Aorta (tissue), 5 donors: ENCODE measurements at regions of chr1 and their contacts with region 1.

Region 1: DNA sequence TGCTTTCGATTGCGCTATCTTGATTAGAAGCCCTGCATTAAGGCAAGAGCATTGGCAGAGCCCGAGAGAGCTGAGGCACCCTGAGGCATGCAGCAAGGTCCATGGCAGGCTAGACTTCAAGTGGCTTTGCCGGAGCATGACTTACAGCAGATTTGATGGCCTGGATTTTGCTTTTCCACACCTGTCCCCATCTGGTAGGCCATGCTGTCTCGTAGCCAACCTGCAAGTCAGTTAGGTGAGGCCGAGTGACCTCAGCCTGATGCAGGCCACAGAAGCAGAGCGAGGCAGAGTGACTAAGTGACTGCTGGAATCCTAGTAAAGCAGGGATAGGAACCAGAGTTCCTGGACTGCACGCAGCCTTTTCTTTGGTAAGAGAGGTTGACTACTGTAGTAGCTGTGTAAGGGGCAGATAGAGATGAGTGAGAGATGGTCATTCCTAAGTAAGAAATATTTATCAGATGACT is 148.9 kb downstream of the PBX1 start:
- DNase-seq: peak in 1 of 2 donors; percentile 65
- ATAC-seq: peak; percentile 52
- H3K4me3 ChIP-seq: no peak overlapping the region
- H3K27ac ChIP-seq: peak overlapping the region in 1 of 2 donors; percentile 79
- H3K4me1 ChIP-seq: peaks cover 9 to 11% of the 10 kb centered on the region in 2 donors
- H3K27me3 ChIP-seq: no peaks in the 10 kb centered on the region

Region 2: GRCh38 chr1:164754088-164754600 is 46.2 kb after region 1 on chr1:
- intact Hi-C with region 1: loop called in 1 of 2 experiments (anchors 5 kb)
- DNase-seq: peak; percentile 54 to 76
- ATAC-seq: peak; percentile 81
- H3K4me3 ChIP-seq: peak overlapping the region; percentile 14 to 57
- H3K27ac ChIP-seq: peak overlapping the region in 1 of 2 donors; percentile 81
- H3K4me1 ChIP-seq: peaks cover 0 to 4% of the 10 kb centered on the region in 2 donors
- H3K27me3 ChIP-seq: no peaks in the 10 kb centered on the region

Region 3: DNA sequence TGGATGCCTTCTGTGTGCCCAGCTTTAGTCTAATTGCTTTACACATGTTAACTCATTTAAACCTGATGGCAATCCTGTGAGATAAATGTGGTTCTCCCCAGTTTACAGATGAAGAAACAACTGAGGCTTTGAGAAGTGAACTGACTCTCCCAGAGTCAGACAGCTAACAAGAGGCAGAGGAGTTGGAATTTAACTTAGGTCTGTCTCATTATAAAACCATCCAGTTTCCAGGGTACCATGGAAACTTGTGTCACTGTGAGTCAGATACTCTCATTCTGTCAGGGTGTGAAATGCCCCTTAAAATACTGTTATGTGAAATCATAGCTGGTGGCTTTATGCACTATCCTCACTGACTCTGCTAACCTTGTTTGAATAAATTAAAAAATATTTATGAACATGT is 57.7 kb after region 1 on chr1:
- intact Hi-C with region 1: loop called in 1 of 2 experiments (anchors 5 kb)
- DNase-seq: no peak
- ATAC-seq: peak; percentile 58
- H3K4me3 ChIP-seq: no peak overlapping the region
- H3K27ac ChIP-seq: peak overlapping the region in 1 of 2 donors; percentile 54
- H3K4me1 ChIP-seq: peaks cover 3 to 13% of the 10 kb centered on the region in 2 donors
- H3K27me3 ChIP-seq: no peaks in the 10 kb centered on the region

Region 4: GRCh38 chr1:165034136-165034809 is 326.4 kb after region 1 on chr1:
- intact Hi-C with region 1: no loop called
- DNase-seq: no peak
- ATAC-seq: no peak
- H3K4me3 ChIP-seq: no peak overlapping the region
- H3K27ac ChIP-seq: no peak overlapping the region
- H3K4me1 ChIP-seq: no peaks in the 10 kb centered on the region
- H3K27me3 ChIP-seq: peaks cover 0 to 5% of the 10 kb centered on the region in 2 donors